A673 (cell line): ENCODE measurements at regions of chr1 and their contacts with region 1.

Region 1: GRCh38 chr1:227734856-227735538 is at the starts of genes JMJD4 and SNAP47:
- DNase-seq: peak; percentile 93
- H3K4me3 ChIP-seq: peak within 1 kb of the TSS; percentile 94
- H3K27ac ChIP-seq: peak within 1 kb of the TSS; percentile 85
- H3K4me1 ChIP-seq: no peaks in the 10 kb centered on the region
- H3K27me3 ChIP-seq: no peaks in the 10 kb centered on the region
- CTCF ChIP-seq: no peak
- total RNA-seq, gene JMJD4: 20.7 and 23.2 TPM in 2 replicates
- total RNA-seq, gene SNAP47: 36.4 and 40.8 TPM in 2 replicates

Region 2: GRCh38 chr1:227489572-227489971 is 245.4 kb before region 1 on chr1:
- CTCF ChIA-PET with region 1: interaction called, 3 read pairs
- POLR2A ChIA-PET with region 1: no interaction called
- intact Hi-C with region 1: loop called (anchors 10 kb)
- DNase-seq: no peak
- H3K4me3 ChIP-seq: no peak overlapping the region
- H3K27ac ChIP-seq: no peak overlapping the region
- H3K4me1 ChIP-seq: no peaks in the 10 kb centered on the region
- H3K27me3 ChIP-seq: no peaks in the 10 kb centered on the region
- CTCF ChIP-seq: no peak

Region 3: DNA sequence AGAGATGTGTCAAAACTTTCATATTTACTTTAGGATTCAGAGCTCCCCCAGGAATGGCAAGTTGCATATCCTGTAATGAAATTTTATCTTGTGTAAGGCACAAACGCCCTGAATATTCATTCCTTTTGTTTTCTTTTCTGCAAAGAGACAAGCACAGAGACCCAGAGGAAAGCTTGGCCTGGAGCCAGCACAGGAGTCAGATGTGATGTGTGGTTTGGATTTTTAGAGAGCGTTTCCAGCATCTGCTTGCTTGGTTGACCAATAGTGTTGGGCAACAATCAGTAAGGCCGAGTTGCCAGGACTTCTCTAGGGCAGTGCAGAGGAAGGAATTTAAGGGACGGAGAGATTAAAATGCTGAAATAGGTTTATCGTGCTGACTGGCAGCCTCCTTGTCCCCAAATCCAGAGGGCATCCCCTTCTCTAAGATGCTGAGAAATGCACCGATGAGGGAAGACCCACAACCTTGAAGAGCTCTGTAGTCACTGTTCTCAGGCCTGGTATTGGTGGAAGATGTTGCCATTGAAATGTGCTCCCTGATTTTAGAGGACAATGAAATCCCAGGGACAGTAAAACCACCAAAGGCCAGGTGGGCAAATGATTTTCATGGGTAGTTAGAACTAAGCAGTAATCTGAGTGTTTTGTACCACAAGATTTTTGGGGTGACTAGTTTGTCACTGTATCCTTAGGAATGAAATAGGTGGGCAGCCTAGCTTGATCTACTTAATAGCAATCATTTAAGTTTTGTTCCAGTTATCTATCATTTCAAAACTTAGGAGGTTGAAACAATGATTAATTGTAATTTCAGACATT is 962.4 kb after region 1 on chr1:
- CTCF ChIA-PET with region 1: no interaction called
- POLR2A ChIA-PET with region 1: no interaction called
- intact Hi-C with region 1: no loop called
- DNase-seq: peak; percentile 21
- H3K4me3 ChIP-seq: no peak overlapping the region
- H3K27ac ChIP-seq: no peak overlapping the region
- H3K4me1 ChIP-seq: no peaks in the 10 kb centered on the region
- H3K27me3 ChIP-seq: no peaks in the 10 kb centered on the region
- CTCF ChIP-seq: no peak